Transverse colon (tissue), 4 donors: ENCODE measurements at regions of chr10 and their contacts with region 1.

Region 1: GRCh38 chr10:72273410-72274212 is at the start of gene DDIT4:
- DNase-seq: peak; percentile 100
- H3K4me3 ChIP-seq: peak within 1 kb of the TSS; percentile 67 to 95 (median 85)
- H3K27ac ChIP-seq: peak within 1 kb of the TSS; percentile 96 to 97 (median 97)
- H3K4me1 ChIP-seq: peaks cover 9 to 45% (median 42%) of the 10 kb centered on the region in 4 donors
- H3K27me3 ChIP-seq: no peaks in the 10 kb centered on the region
- CTCF ChIP-seq: no peak
- EP300 ChIP-seq: no peak
- POLR2A ChIP-seq: peak; percentile 100
- total RNA-seq, gene DDIT4: 64.5 to 356 (median 150) TPM

Region 2: GRCh38 chr10:71419750-71420149 is 853.9 kb before region 1 on chr10:
- in situ Hi-C with region 1: no loop called
- intact Hi-C with region 1: no loop called
- DNase-seq: no peak
- H3K4me3 ChIP-seq: no peak overlapping the region
- H3K27ac ChIP-seq: no peak overlapping the region
- H3K4me1 ChIP-seq: no peaks in the 10 kb centered on the region
- H3K27me3 ChIP-seq: peaks cover 4% of the 10 kb centered on the region
- CTCF ChIP-seq: no peak
- EP300 ChIP-seq: no peak
- POLR2A ChIP-seq: no peak

Region 3: DNA sequence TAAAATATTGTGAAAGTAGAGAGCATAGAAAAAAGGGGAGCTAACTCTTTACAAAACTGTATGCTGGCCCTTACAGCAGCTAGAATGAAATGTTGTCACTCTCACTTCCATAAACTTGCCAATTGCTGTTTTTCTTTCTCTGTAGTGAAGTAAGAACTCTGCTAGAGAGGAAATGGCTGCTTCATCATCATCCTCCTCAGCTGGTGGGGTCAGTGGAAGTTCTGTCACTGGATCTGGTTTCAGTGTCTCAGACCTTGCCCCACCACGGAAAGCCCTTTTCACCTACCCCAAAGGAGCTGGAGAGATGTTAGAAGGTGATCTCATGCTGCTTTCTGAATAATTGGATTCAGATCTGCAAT is 49.9 kb before region 1 on chr10:
- in situ Hi-C with region 1: no loop called
- intact Hi-C with region 1: loop called (anchors 2 kb)
- DNase-seq: no peak
- H3K4me3 ChIP-seq: no peak overlapping the region
- H3K27ac ChIP-seq: peak overlapping the region; percentile 55 to 77 (median 68)
- H3K4me1 ChIP-seq: peaks cover 13 to 43% (median 18%) of the 10 kb centered on the region in 4 donors
- H3K27me3 ChIP-seq: no peaks in the 10 kb centered on the region
- CTCF ChIP-seq: no peak
- EP300 ChIP-seq: no peak
- POLR2A ChIP-seq: no peak

Region 4: GRCh38 chr10:72328045-72328828 is 54.6 kb after region 1 on chr10:
- in situ Hi-C with region 1: no loop called
- intact Hi-C with region 1: no loop called
- DNase-seq: peak; percentile 72
- H3K4me3 ChIP-seq: no peak overlapping the region
- H3K27ac ChIP-seq: peak overlapping the region; percentile 31 to 51 (median 37)
- H3K4me1 ChIP-seq: peaks cover 27 to 56% (median 43%) of the 10 kb centered on the region in 4 donors
- H3K27me3 ChIP-seq: no peaks in the 10 kb centered on the region
- CTCF ChIP-seq: peak; percentile 43 to 74 (median 60)
- EP300 ChIP-seq: no peak
- POLR2A ChIP-seq: no peak